Activated CD8-positive, alpha-beta T cell treated with anti-CD3 and anti-CD28 coated beads for 36 hours (primary cell): ENCODE measurements at regions of chr11 and their contacts with region 1.

Region 1: GRCh38 chr11:81644239-81644840 is 1089.3 kb downstream of the FAM181B start:
- DNase-seq: peak; percentile 16
- ATAC-seq: peak; percentile 62
- H3K4me3 Mint-ChIP-seq: no peak overlapping the region
- H3K27ac Mint-ChIP-seq: no peak overlapping the region
- H3K4me1 Mint-ChIP-seq: no peaks in the 10 kb centered on the region
- H3K27me3 Mint-ChIP-seq: peaks cover 17% of the 10 kb centered on the region
- CTCF ChIP-seq: peak; percentile 65

Region 2: GRCh38 chr11:81888391-81888790 is 244.1 kb after region 1 on chr11:
- CTCF ChIA-PET with region 1: no interaction called
- POLR2A ChIA-PET with region 1: no interaction called
- intact Hi-C with region 1: no loop called
- DNase-seq: no peak
- ATAC-seq: no peak
- H3K4me3 Mint-ChIP-seq: no peak overlapping the region
- H3K27ac Mint-ChIP-seq: no peak overlapping the region
- H3K4me1 Mint-ChIP-seq: peaks cover 10% of the 10 kb centered on the region
- H3K27me3 Mint-ChIP-seq: no peaks in the 10 kb centered on the region
- CTCF ChIP-seq: no peak

Region 3: DNA sequence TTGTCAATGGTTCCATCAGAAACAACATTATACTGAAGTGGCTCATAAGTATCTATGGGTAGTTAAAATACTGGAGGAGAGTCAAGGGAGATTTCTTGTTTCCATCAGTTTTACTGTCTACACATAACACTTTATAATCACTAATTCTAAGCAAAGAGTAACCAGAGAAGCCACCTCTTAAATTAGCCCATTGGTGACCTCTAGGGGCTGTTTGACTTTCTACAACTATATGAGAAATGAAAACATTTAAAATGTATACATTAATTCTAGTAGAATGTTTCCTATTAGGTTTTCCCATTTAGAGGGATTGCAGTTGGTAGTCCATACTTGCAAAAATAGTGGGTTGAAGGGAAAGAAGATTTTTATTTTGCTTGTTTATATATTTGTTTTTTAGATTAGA is 585.0 kb after region 1 on chr11:
- CTCF ChIA-PET with region 1: interaction called, 13 read pairs
- POLR2A ChIA-PET with region 1: no interaction called
- intact Hi-C with region 1: loop called (anchors 2 kb)
- DNase-seq: no peak
- ATAC-seq: peak; percentile 51
- H3K4me3 Mint-ChIP-seq: no peak overlapping the region
- H3K27ac Mint-ChIP-seq: no peak overlapping the region
- H3K4me1 Mint-ChIP-seq: no peaks in the 10 kb centered on the region
- H3K27me3 Mint-ChIP-seq: peaks cover 1% of the 10 kb centered on the region
- CTCF ChIP-seq: peak; percentile 63